B cell (primary cell): ENCODE measurements at regions of chr1 and their contacts with region 1.

Region 1: DNA sequence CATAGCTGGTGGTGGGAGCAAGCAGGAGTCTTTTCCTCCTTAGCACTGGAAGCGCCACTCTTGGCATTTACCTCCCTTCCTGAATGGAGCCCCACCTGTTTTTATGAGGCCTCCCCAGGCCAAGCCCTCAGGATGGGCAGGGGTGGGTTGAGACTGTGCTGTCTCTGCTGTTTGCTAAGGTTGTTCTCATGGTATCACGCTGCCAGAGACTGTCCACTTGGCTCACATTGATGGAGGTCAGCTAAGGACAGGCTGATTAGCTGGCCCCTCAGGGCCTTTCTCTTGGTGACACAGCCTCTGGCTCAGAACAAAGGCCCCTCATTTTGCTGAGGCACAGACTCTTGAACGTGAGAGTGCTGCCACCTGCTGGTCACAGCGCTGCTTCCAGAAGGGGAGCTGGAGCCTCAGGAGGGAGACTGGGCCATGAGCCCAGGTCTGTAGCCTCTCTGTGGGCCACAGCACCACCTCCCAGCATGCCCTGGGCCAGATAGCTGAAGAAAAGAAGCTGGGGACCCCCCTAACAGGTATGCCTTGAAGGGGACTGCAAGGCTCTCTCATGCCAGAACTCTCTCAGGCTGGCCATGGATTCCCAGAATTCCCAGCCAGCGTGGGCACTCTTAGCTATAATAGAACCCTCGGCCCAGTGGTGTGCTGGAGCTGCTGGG is 85.6 kb downstream of the CD58 start:
- DNase-seq: peak; percentile 84
- ATAC-seq: peak; percentile 91
- H3K4me3 ChIP-seq: no peak overlapping the region
- H3K4me3 Mint-ChIP-seq: no peak overlapping the region
- H3K27ac ChIP-seq: no peak overlapping the region
- H3K27ac Mint-ChIP-seq: peak overlapping the region; percentile 56
- H3K4me1 ChIP-seq: peaks cover 0 to 3% of the 10 kb centered on the region in 2 donors
- H3K4me1 Mint-ChIP-seq: peaks cover 3% of the 10 kb centered on the region
- H3K27me3 ChIP-seq: no peaks in the 10 kb centered on the region
- H3K27me3 Mint-ChIP-seq: no peaks in the 10 kb centered on the region
- CTCF ChIP-seq: peak; percentile 93

Region 2: DNA sequence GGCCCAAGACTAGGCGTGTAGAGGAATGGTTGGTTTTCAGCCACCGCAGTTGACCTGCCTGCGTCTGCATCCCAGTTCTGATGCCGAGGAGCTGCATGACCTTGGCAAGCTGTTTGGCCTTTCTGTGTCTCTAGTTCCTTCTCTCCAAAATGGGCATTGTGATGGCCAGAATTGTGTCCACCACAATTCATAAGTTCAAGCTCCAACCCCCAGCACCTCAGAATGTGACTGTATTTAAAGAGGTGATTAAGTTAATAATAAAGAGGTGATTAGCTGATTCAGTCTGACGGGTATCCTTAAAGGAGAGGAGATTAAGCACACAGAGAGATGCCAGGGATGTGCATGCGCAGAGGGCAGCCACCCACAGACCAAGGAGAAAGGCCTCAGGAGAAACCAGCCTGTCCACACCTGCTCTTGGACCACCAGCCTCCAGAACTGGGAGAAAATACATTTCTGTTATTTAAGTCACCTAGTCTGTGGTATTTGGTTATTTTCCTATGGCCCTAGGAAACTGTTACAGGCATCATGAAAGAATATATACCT is 345.5 kb before region 1 on chr1:
- CTCF ChIA-PET with region 1: interaction called, 578 read pairs
- POLR2A ChIA-PET with region 1: no interaction called
- intact Hi-C with region 1: loop called (anchors 1 kb)
- DNase-seq: no peak
- ATAC-seq: no peak
- H3K4me3 ChIP-seq: no peak overlapping the region
- H3K4me3 Mint-ChIP-seq: no peak overlapping the region
- H3K27ac ChIP-seq: no peak overlapping the region
- H3K27ac Mint-ChIP-seq: no peak overlapping the region
- H3K4me1 ChIP-seq: no peaks in the 10 kb centered on the region
- H3K4me1 Mint-ChIP-seq: peaks cover 5% of the 10 kb centered on the region
- H3K27me3 ChIP-seq: peaks cover 0 to 5% (median under 1%) of the 10 kb centered on the region in 4 experiments
- H3K27me3 Mint-ChIP-seq: peaks cover 11% of the 10 kb centered on the region
- CTCF ChIP-seq: no peak

Region 3: DNA sequence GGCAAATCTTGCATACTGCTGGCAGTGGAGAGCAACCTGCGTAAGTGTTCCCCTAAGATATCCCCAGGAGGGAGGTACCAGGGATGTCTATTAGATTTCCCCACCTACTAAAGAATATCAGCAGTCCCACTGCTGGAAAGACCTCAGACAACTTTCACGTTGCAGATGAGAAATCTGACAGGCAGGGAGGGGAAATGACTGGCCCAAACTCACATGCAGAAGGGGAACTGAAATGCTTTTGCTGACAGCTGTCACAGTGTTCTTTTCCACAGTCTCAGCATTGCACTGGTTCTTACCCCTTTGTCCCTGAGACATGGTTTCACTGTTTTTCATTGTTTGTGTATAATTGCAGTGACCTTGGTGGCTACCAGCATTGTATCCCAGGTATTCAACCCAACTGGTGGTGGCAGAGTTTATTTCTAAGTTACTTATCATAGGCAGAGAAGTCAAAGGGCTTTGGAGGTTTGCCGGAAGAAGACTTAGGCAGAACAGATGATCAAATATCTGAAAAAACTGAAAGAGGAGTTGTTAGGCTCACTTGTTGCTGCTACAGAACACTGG is 196.9 kb before region 1 on chr1:
- CTCF ChIA-PET with region 1: no interaction called
- POLR2A ChIA-PET with region 1: no interaction called
- intact Hi-C with region 1: no loop called
- DNase-seq: no peak
- ATAC-seq: no peak
- H3K4me3 ChIP-seq: no peak overlapping the region
- H3K4me3 Mint-ChIP-seq: no peak overlapping the region
- H3K27ac ChIP-seq: no peak overlapping the region
- H3K27ac Mint-ChIP-seq: no peak overlapping the region
- H3K4me1 ChIP-seq: no peaks in the 10 kb centered on the region
- H3K4me1 Mint-ChIP-seq: peaks cover 5% of the 10 kb centered on the region
- H3K27me3 ChIP-seq: peaks cover 0 to 11% (median 2%) of the 10 kb centered on the region in 4 experiments
- H3K27me3 Mint-ChIP-seq: peaks cover 47% of the 10 kb centered on the region
- CTCF ChIP-seq: no peak

Region 4: DNA sequence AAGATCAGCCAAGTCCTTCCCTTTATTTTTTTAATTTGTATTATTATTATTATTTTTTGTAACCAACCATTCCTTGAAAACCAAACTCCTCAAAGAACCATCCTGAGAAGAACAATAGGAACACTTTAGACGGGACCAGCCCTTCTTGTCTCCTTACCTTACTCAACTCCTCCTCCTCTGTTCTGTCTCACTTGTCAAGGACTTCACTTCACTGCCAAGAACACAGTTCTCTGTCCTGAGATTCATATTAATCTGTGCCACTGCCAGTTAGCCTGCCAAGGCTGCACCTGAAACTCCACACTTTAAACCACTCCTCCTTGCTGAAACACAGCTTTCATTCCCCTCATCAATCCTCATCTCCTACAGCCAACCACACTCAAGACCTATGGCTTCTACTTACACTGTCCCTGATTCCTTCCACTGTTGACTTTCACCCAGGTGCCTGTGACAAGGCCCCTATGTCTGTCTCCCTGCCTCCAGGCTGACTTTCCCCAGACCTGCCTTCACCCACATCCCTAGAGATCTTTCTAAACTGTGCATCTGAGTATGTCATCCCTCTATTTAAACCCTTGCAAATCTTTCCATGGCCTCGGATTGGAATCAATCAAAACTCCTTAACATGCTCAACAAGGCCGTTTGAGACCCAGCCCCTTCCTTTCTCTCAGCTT is 185.8 kb before region 1 on chr1:
- CTCF ChIA-PET with region 1: no interaction called
- POLR2A ChIA-PET with region 1: no interaction called
- intact Hi-C with region 1: no loop called
- DNase-seq: no peak
- ATAC-seq: no peak
- H3K4me3 ChIP-seq: no peak overlapping the region
- H3K4me3 Mint-ChIP-seq: no peak overlapping the region
- H3K27ac ChIP-seq: no peak overlapping the region
- H3K27ac Mint-ChIP-seq: no peak overlapping the region
- H3K4me1 ChIP-seq: no peaks in the 10 kb centered on the region
- H3K4me1 Mint-ChIP-seq: no peaks in the 10 kb centered on the region
- H3K27me3 ChIP-seq: no peaks in the 10 kb centered on the region
- H3K27me3 Mint-ChIP-seq: peaks cover 4% of the 10 kb centered on the region
- CTCF ChIP-seq: no peak

Region 5: DNA sequence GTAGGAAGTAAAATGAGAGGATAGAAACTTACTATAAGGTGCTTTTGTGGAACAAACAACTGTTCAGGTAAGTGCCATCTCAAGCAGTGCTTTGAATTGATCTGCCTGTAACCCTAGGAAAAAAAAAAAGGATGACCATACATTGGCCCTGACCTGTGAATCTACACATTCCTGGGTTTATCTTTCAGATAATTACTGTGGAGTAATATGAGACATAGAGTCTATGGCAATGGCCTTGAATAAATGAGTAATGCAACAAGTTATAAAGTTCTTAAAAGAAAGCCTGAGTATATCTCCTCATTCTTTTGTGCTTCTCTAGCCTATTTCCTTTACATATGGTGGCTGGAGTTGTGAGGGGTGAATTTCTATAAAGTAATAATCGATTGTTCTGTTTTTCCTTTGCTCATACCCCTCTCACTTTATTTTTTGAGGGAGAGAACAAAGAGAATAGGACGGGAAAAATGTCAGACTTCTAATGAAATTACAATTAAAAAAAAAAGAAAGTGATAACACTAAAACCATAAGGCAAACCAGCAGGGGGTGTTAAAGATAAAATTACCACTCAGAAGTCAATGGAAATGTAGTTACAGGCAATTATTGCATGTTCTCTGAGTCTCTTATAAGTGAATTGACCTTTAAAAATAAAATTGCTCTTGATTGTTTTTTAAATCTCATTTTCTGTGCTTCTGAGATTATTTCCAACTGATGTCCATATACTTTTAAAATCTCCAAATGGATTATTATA is 124.6 kb before region 1 on chr1:
- CTCF ChIA-PET with region 1: interaction called, 28 read pairs
- POLR2A ChIA-PET with region 1: no interaction called
- intact Hi-C with region 1: loop called (anchors 1 kb)
- DNase-seq: no peak
- ATAC-seq: no peak
- H3K4me3 ChIP-seq: no peak overlapping the region
- H3K4me3 Mint-ChIP-seq: no peak overlapping the region
- H3K27ac ChIP-seq: no peak overlapping the region
- H3K27ac Mint-ChIP-seq: no peak overlapping the region
- H3K4me1 ChIP-seq: no peaks in the 10 kb centered on the region
- H3K4me1 Mint-ChIP-seq: peaks cover 2% of the 10 kb centered on the region
- H3K27me3 ChIP-seq: peaks cover 0 to 3% (median 0%) of the 10 kb centered on the region in 4 experiments
- H3K27me3 Mint-ChIP-seq: peaks cover 25% of the 10 kb centered on the region
- CTCF ChIP-seq: peak; percentile 38

Region 6: DNA sequence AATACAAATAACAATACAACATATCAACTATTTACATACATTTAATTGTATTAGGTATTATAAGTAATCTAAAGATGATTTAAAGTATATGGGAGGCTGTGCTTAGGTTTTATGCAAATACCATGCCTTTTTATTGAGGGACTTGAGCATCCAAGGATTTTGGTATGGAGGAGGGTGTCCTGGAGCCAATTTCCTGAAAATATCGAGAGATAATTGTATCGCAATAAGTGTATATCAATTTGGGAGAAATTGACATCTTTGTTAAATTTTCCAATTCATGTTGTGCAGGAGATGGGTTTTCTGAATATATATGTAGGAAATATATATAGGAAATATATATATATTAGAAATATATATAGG is 48.6 kb before region 1 on chr1:
- CTCF ChIA-PET with region 1: no interaction called
- POLR2A ChIA-PET with region 1: no interaction called
- intact Hi-C with region 1: no loop called
- DNase-seq: no peak
- ATAC-seq: no peak
- H3K4me3 ChIP-seq: no peak overlapping the region
- H3K4me3 Mint-ChIP-seq: no peak overlapping the region
- H3K27ac ChIP-seq: no peak overlapping the region
- H3K27ac Mint-ChIP-seq: no peak overlapping the region
- H3K4me1 ChIP-seq: no peaks in the 10 kb centered on the region
- H3K4me1 Mint-ChIP-seq: no peaks in the 10 kb centered on the region
- H3K27me3 ChIP-seq: peaks cover 0 to 5% (median 2%) of the 10 kb centered on the region in 4 experiments
- H3K27me3 Mint-ChIP-seq: peaks cover 6% of the 10 kb centered on the region
- CTCF ChIP-seq: no peak

Region 7: DNA sequence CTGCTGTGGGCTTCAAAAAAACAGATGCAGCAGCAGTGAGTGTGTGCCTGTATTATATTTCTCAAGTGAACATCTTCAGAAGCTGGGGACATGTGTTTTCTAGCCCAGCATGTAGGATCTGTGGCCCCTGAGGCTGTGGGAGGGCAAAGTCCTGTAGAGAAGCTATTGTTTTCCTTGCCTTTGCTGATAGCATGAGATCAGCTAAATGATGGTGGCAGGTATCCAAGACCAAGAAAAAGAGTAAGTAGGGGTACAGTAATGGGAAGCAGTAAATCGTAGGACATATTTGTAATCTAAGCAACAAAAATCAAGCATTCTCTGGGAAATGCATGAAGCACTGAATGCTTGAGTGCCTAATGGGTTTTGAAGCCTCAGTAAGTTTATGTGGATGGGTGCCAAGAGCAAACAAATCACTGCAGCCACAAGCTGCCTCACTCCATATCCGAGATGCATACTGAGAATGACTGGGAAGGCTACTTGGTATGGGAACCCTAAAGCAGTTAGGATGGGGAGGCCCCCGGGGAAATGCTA is 12.7 kb before region 1 on chr1:
- CTCF ChIA-PET with region 1: interaction called, 36 read pairs
- POLR2A ChIA-PET with region 1: no interaction called
- intact Hi-C with region 1: no loop called
- DNase-seq: no peak
- ATAC-seq: no peak
- H3K4me3 ChIP-seq: no peak overlapping the region
- H3K4me3 Mint-ChIP-seq: no peak overlapping the region
- H3K27ac ChIP-seq: no peak overlapping the region
- H3K27ac Mint-ChIP-seq: no peak overlapping the region
- H3K4me1 ChIP-seq: no peaks in the 10 kb centered on the region
- H3K4me1 Mint-ChIP-seq: no peaks in the 10 kb centered on the region
- H3K27me3 ChIP-seq: no peaks in the 10 kb centered on the region
- H3K27me3 Mint-ChIP-seq: no peaks in the 10 kb centered on the region
- CTCF ChIP-seq: no peak

Region 8: DNA sequence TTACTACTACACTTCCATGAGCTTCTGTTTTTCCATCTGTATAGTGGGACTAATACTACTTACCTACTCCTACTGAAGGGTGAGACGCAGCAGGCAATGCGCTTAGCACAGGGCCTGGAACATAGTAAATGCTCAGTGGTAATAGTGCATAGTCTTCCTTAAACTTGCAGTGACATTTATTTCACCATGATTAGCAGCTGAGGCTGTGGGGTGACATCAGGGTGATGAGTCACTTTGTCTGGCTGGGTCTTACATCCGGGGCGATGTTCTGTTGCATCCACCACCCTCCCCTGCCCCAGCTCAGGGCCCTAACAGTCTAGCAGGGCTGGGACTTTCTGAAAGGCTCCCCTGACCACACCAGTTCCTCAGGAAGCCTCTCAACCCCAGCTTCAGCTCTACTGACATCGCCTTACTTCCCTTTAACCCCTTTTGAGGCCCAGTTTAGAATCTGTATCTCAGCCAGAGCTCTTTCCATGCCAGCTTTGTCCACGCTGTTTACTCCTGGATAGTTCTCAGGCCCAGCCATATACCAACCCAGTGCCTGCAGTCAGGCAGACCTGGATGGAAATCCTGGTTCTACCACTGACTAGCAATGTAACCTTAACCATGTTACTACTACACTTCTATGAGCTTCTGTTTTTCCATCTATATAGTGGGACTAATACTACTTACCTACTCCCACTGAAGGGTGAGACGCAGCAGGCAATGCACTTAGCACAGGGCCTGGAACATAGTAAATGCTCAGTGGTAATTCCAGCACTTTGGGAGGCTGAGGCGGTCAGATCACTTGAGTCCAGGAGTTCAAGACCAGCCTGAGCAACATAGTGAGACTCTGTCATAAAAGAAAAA is 19.3 kb after region 1 on chr1:
- CTCF ChIA-PET with region 1: interaction called, 115 read pairs
- POLR2A ChIA-PET with region 1: no interaction called
- intact Hi-C with region 1: loop called (anchors 2 kb)
- DNase-seq: peak; percentile 89
- ATAC-seq: peak; percentile 98
- H3K4me3 ChIP-seq: no peak overlapping the region
- H3K4me3 Mint-ChIP-seq: peak overlapping the region; percentile 50
- H3K27ac ChIP-seq: peak overlapping the region; percentile 66 to 77
- H3K27ac Mint-ChIP-seq: peak overlapping the region; percentile 83
- H3K4me1 ChIP-seq: peaks cover 24 to 31% of the 10 kb centered on the region in 2 donors
- H3K4me1 Mint-ChIP-seq: peaks cover 45% of the 10 kb centered on the region
- H3K27me3 ChIP-seq: no peaks in the 10 kb centered on the region
- H3K27me3 Mint-ChIP-seq: no peaks in the 10 kb centered on the region
- CTCF ChIP-seq: no peak